ENCODE measurements at regions of chr22 and their contacts with region 1.

Region 1: DNA sequence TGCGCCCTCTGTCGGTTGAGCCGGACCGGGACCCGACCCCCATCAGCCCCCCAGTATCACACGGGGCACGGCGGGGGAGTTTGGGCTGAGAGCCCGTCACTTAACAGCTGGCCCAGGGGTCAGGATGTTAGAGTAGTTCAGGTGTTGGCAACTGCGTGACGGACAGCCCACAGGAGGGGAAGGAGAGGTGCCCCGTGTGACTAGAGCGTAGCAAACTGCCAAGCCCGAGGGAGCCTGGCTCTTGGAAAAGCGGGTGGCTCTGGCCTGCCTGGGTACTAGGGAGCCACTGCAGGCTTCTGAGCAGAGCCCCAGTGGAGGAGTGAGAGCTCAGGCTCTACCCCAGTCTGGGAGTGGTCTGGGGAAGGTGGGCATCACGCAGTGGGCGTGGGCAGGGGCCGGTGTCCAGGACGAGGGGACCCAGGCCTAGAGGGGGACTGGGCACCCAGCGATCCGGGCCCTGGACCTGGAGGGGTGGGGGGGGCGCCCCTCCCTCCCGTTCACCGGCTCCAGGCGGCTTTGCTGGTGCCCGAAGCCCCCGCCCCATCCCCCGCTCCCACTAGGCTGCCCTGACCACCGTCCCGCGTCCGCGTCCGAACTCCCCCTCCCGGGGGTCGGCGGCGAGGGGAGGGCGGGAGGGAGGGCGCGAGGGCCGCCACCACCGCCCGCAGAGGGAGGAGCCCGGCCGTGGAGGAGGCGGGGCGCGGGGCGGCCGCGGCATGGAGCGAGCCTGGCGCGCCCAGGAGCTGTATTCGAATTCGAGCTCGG is 24.4 kb downstream of the SHANK3 start:
- DNase-seq: no peak
- H3K4me3 ChIP-seq: peak overlapping the region; percentile 58
- CTCF ChIP-seq: peak; percentile 84

Region 2: DNA sequence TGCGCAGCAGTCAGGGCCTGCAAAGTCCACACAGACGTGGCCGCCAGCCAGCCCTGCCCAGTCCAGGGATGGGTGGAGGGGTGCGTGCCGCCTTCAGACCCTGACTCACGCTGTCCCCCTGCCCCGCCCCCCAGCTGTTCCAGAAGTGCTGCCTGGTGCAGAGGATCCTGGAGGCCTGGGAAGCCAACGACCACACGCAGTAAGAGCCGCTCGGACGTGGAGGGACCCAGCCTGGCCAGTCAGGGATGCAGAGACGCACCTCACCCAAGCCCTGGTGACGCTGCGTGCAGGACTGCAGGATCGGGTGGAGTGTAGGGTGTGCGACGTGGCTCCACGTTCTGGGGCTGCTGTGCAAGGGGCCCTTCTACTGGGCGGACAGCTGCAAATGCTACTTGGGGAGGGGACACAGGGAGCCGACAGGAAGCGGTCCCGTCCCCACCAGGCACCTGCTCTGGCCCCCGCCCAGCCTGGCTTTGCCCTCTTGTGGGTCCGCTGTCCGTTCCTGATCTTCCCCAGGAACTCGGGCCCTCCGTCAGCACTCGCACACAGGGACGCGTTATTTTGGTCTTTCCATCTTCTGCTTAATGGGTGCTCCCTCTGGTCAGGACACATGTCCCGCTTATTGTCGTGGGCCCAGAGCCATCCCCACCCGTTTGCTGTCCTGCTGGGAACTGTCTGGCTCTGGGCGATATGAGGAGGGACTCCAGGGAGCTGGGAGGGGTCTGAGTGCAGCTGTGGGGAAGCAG is 264.7 kb before region 1 on chr22:
- CTCF ChIA-PET with region 1: no interaction called
- POLR2A ChIA-PET with region 1: no interaction called
- DNase-seq: no peak
- H3K4me3 ChIP-seq: no peak overlapping the region
- CTCF ChIP-seq: no peak

Region 3: DNA sequence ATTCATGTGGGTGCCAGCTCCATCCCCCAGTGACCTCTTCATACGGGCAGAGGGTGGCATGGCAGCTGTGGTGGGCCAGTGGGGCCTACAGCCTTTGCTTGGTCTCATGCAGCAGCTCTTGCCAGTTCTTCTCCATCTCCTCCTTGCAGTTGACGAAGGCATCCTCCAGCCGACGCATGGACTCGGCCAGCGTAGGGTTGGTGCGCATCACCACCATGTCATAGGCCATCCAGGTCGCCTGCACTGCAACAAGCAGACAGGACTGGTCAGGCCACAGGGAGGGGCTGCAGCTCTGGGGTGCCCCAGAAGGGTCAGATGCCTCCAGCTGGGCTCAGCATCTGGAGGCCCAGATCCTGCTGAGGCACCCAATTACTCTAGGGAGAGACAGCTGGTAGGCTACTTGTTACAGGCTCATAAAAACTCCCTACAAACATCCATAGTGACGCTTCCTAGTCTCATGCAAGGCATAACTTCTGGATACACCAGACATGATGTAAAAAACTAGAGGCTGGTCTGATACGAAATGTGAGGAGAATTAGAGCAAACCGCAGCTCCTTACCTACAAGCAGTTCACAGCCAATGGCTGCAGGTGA is 145.7 kb before region 1 on chr22:
- CTCF ChIA-PET with region 1: no interaction called
- POLR2A ChIA-PET with region 1: no interaction called
- DNase-seq: no peak
- H3K4me3 ChIP-seq: no peak overlapping the region
- CTCF ChIP-seq: no peak

Region 4: DNA sequence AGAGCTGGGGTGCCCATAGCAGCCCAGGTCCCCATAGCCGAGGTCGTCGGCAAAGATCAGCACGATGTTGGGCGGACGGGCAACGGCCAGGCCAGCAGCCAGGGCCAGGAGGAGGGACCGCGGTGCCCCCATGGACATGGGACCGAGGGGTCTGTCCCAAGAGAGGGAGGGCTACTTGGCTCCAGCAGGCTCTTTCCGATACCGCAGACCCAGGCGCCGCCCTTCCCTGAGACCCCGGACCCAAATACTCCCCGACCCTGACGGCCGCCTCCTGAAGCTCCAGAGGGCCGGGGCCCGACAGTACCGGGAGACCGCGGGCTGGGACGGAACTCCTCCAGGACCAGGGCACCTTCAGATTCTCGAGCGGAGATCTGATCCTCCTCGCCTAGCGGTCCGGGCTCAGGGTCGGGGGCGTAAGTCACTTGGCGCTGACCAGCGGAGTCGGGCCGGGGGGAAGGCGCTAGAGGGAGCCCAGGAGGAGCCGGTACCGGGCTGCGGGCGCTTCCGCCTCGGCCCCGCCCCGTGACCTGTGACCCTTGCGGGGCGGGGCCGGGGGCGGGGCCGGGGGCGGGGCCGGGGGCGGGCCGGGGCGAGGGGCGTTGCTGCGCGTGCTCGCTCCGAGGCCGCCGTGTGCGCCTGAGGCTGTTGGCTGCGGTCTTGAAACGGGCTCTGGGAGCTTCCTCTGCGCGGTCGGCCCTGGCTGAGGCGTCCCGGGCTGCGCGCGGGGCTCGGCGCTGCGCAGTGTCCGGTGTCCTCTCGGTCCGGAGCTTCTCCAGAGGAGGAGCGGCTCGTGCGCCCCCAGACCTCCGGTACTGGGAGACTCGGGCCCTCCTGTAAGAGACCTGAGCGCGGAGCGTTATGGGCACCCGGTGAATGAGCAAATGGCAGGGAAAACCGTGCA is 69.1 kb before region 1 on chr22 and contains the start of gene ARSA:
- CTCF ChIA-PET with region 1: interaction called, 16 read pairs
- POLR2A ChIA-PET with region 1: no interaction called
- DNase-seq: peak; percentile 10
- H3K4me3 ChIP-seq: peak within 1 kb of the TSS; percentile 81
- CTCF ChIP-seq: peak; percentile 65